Aorta (tissue), 5 donors: ENCODE measurements at regions of chr6 and their contacts with region 1.

Region 1: DNA sequence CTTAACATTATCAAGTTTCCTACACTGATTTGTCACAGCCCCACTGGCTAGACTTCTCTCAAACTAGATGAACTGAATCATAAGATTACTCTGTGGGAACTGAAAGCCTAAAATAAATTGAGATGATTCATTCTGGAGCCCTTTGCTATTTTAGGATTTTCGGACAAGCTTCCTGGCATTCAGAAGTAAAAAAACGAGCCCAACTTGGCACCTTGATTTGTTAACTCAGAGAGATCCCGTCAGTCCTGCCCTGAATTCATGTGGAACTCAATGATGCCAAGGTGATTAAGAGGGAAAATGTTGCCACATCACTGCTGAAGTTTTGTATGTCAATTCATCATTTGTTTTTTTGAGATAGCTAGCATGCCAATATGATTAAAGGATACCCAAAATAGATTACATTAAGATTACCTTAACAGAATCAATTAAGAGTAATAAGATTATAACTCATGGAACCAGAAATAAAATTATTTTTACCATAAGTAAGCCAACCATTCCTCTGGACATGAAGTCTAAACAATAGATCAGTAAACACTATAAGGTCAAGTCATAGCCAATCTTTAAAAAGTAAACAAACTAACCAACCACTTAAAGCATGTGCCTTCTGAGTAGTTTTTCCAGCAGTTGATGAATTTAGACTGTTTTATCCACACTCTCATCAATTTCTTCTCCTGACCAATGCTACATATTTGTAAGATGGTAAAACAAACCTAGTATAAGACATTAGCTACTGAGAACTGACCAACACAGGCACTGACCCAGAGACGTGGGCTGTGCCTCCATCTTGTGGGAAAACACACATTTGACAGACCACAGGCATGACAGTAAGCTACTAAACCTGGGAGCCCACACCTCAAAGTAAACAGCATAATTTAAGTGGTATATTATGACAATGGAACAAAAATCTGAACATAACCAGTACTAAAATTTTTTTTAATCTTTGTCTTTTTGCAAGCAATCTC is 121.6 kb upstream of the NRSN1 start:
- DNase-seq: no peak
- ATAC-seq: peak; percentile 83
- H3K4me3 ChIP-seq: no peak overlapping the region
- H3K27ac ChIP-seq: peak overlapping the region; percentile 77 to 87
- H3K4me1 ChIP-seq: peaks cover 0 to 3% of the 10 kb centered on the region in 2 donors
- H3K27me3 ChIP-seq: no peaks in the 10 kb centered on the region

Region 2: DNA sequence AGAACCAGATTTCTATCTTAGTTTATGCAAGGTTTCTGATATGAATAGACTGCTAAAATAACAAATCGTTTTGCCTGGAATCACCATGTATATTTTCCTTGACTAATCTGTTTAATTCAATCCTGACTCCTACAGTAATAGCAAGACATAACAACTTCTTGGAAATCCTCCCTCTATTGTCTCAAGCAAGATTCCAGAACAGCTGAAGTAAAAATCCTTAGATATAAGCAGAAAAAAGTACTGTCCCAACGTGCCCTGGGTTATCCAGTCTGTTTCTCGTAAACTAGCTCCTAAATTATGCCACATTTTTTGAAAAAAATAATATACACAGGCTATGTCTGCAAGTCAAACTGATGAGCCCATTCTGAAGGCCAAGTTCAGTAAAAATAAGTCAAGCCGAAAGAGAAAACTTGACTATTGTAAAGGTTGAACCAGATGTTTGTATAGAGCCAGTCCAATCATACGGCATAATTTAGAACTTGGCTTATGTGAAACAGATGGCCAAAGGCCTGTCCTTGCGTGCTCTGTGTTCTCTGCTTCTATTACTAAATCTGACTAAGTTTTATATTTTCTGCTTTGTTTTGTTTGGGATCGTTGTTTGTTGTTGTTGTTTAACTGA is 220.0 kb before region 1 on chr6:
- intact Hi-C with region 1: loop called in 1 of 2 experiments (anchors 5 kb)
- DNase-seq: no peak
- ATAC-seq: no peak
- H3K4me3 ChIP-seq: no peak overlapping the region
- H3K27ac ChIP-seq: peak overlapping the region in 1 of 2 donors; percentile 43
- H3K4me1 ChIP-seq: peaks cover 2 to 5% of the 10 kb centered on the region in 2 donors
- H3K27me3 ChIP-seq: no peaks in the 10 kb centered on the region

Region 3: GRCh38 chr6:23855497-23856116 is 148.8 kb before region 1 on chr6:
- intact Hi-C with region 1: no loop called
- DNase-seq: peak in 1 of 2 donors; percentile 54
- ATAC-seq: no peak
- H3K4me3 ChIP-seq: no peak overlapping the region
- H3K27ac ChIP-seq: no peak overlapping the region
- H3K4me1 ChIP-seq: no peaks in the 10 kb centered on the region
- H3K27me3 ChIP-seq: no peaks in the 10 kb centered on the region

Region 4: GRCh38 chr6:24043848-24044247 is 39.5 kb after region 1 on chr6:
- intact Hi-C with region 1: no loop called
- DNase-seq: no peak
- ATAC-seq: no peak
- H3K4me3 ChIP-seq: no peak overlapping the region
- H3K27ac ChIP-seq: no peak overlapping the region
- H3K4me1 ChIP-seq: no peaks in the 10 kb centered on the region
- H3K27me3 ChIP-seq: no peaks in the 10 kb centered on the region

Region 5: DNA sequence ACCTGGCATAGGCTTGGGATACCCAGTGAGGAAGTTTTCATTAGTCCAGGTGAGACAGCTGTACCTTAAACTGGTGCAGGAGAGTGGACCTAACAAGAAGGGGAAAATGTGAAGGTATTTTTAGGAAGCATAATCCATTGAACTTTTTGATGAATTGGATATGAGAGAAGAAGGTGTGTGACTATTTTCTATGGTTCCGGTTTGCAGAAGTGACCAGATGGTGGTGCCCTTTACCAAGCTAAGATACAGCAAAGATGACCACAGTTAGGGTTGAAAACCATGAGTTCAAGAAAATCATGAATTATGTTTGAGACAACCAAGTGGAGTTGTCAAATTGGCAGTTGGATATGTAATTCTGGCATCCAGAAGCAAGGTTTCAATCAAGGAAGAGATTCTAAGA is 59.7 kb after region 1 on chr6:
- intact Hi-C with region 1: loop called in 1 of 2 experiments (anchors 10 kb)
- DNase-seq: no peak
- ATAC-seq: no peak
- H3K4me3 ChIP-seq: no peak overlapping the region
- H3K27ac ChIP-seq: no peak overlapping the region
- H3K4me1 ChIP-seq: peaks cover 0 to 3% of the 10 kb centered on the region in 2 donors
- H3K27me3 ChIP-seq: no peaks in the 10 kb centered on the region